H1 (cell line): ENCODE measurements at regions of chr11 and their contacts with region 1.

Region 1: GRCh38 chr11:117817368-117818040 is 7.0 kb downstream of the FXYD2 start:
- DNase-seq: peak; percentile 70 to 97
- H3K4me3 ChIP-seq: peak overlapping the region in 3 of 4 experiments; percentile 10 to 46 (median 29); a peak in 4 of 8 replicates
- H3K27ac ChIP-seq: no peak overlapping the region
- H3K4me1 ChIP-seq: peaks cover 0 to 31% (median 20%) of the 10 kb centered on the region in 4 experiments; a peak in 6 of 7 replicates
- H3K27me3 ChIP-seq: no peaks in the 10 kb centered on the region; a peak in 1 of 7 replicates
- CTCF ChIP-seq: peak in 2 of 3 experiments; percentile 87 to 96; a peak in 3 of 4 replicates
- EP300 ChIP-seq: no peak
- POLR2A ChIP-seq: no peak
- RAD21 ChIP-seq: peak; percentile 85 to 88

Region 2: DNA sequence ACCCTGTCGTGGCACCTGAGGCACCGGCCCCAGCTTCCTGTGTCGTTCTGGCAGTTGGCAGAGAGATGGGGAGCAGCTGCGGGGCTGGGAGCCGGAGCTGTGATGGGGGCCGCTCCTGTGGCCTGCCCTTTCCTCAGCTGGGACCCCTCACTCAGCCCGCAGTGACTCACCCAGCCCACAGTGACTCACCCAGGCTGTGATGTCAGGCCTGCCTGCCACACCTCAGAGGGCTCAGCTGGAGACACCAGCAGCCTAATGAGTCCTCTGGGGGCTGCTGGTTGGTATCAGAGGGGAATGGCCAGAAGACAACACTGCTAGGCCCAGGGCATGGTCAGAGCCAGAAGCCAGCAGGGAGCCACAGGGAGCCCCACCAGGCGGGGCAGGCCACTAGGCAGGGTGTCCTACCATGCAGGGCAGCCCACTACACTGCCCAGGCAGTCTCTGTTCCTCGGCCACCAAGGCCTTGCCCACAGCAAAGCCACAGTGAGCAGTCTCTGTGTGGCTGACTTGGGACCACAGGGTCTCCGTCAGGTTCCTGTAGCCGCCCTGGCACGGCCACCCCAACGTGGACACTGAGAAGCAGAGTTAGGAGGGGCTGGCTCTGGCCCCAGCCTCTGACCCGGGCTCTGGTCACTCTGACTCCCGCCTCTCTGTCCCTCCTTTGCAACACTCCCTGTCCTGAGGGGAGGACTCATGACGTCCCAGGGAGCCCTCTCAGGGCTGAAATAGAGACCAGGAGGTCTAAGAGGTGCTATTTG is 11.3 kb after region 1 on chr11:
- CTCF ChIA-PET with region 1: interaction called, 32 read pairs
- POLR2A ChIA-PET with region 1: no interaction called
- DNase-seq: peak in 1 of 2 experiments; percentile 43
- H3K4me3 ChIP-seq: no peak overlapping the region
- H3K27ac ChIP-seq: no peak overlapping the region; the same call in 1 of the 2 replicates
- H3K4me1 ChIP-seq: peaks cover 0 to 18% (median 10%) of the 10 kb centered on the region in 4 experiments; a peak in 6 of 7 replicates
- H3K27me3 ChIP-seq: no peaks in the 10 kb centered on the region; a peak in 1 of 7 replicates
- CTCF ChIP-seq: no peak
- EP300 ChIP-seq: no peak
- POLR2A ChIP-seq: no peak
- RAD21 ChIP-seq: no peak

Region 3: GRCh38 chr11:117907251-117907981 is 89.9 kb after region 1 on chr11:
- CTCF ChIA-PET with region 1: interaction called, 36 read pairs
- POLR2A ChIA-PET with region 1: no interaction called
- DNase-seq: peak; percentile 64 to 92
- H3K4me3 ChIP-seq: peak overlapping the region; percentile 2 to 34 (median 12); a peak in 4 of 8 replicates
- H3K27ac ChIP-seq: no peak overlapping the region
- H3K4me1 ChIP-seq: peaks cover 0 to 12% (median 3%) of the 10 kb centered on the region in 4 experiments; a peak in 5 of 7 replicates
- H3K27me3 ChIP-seq: no peaks in the 10 kb centered on the region
- CTCF ChIP-seq: no peak
- EP300 ChIP-seq: no peak
- POLR2A ChIP-seq: no peak
- RAD21 ChIP-seq: no peak

Region 4: GRCh38 chr11:117932067-117932370 is 114.5 kb after region 1 on chr11:
- CTCF ChIA-PET with region 1: interaction called, 17 read pairs
- POLR2A ChIA-PET with region 1: no interaction called
- DNase-seq: no peak
- H3K4me3 ChIP-seq: no peak overlapping the region
- H3K27ac ChIP-seq: no peak overlapping the region
- H3K4me1 ChIP-seq: peaks cover 0 to 10% (median 5%) of the 10 kb centered on the region in 4 experiments; a peak in 6 of 7 replicates
- H3K27me3 ChIP-seq: no peaks in the 10 kb centered on the region; a peak in 1 of 7 replicates
- CTCF ChIP-seq: no peak
- EP300 ChIP-seq: no peak
- POLR2A ChIP-seq: no peak
- RAD21 ChIP-seq: no peak